ENCODE measurements at regions of chrX and their contacts with region 1.

Region 1: GRCh38 chrX:47644557-47645091 is 5.7 kb downstream of the ELK1 start:
- DNase-seq: no peak
- ATAC-seq: peak; percentile 70

Region 2: GRCh38 chrX:47540754-47541538 is 103.7 kb before region 1 on chrX:
- intact Hi-C with region 1: loop called (anchors 2 kb)
- DNase-seq: peak; percentile 64
- ATAC-seq: peak; percentile 99

Region 3: DNA sequence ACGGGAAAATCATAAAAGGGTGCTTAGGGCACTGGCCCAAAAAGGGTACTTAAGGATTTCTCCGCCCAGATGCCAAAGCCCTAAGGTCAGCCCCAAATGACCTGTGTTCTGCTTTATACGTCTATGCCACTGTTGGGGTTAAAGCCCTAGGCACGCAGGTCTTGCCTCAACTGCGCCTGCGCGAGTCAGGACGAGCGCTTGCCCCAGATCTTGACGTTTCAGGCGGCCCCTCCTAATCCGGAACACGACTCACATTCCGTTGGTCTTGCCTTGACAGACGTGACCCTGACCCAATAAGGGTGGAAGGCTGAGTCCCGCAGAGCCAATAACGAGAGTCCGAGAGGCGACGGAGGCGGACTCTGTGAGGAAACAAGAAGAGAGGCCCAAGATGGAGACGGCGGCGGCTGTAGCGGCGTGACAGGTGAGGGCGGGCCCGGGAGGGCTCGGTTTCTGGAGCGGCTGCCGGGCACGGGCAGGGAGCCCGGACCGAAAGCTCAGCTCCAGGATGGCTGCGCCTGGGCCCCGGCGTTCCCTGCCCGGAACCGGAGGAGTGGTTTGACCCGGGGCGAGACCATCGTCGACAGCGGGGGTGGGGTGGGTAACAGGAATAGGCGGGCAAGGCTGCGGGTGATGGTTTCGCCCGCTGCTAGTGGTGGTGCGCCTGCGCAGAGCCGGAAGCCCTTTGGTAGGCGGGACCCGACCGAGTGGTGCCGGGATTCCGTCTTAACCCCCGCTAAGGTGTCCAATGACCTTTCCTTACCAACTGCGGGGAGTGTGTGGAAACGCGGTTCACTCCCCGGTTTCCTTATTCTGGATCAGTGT is 83.6 kb before region 1 on chrX and contains the start of gene ARAF:
- intact Hi-C with region 1: loop called (anchors 5 kb)
- DNase-seq: peak; percentile 96
- ATAC-seq: peak; percentile 96
- total RNA-seq, gene ARAF: 76.5 TPM

Measured in Right ventricle myocardium inferior (tissue), 1 donor.